ENCODE measurements at regions of chr5 and their contacts with region 1.

Region 1: GRCh38 chr5:177370488-177371119 is 12.9 kb downstream of the RGS14 start:
- DNase-seq: peak; percentile 89 to 95
- ATAC-seq: peak; percentile 79 to 88
- H3K4me3 ChIP-seq: peak overlapping the region; percentile 48
- H3K27ac ChIP-seq: peak overlapping the region; percentile 69 to 89
- H3K4me1 ChIP-seq: peaks cover 17% of the 10 kb centered on the region; the same call in 2 of the 3 replicates
- CTCF ChIP-seq: peak; percentile 51
- EP300 ChIP-seq: no peak
- POLR2A ChIP-seq: no peak
- RAD21 ChIP-seq: peak; percentile 58 to 68

Region 2: DNA sequence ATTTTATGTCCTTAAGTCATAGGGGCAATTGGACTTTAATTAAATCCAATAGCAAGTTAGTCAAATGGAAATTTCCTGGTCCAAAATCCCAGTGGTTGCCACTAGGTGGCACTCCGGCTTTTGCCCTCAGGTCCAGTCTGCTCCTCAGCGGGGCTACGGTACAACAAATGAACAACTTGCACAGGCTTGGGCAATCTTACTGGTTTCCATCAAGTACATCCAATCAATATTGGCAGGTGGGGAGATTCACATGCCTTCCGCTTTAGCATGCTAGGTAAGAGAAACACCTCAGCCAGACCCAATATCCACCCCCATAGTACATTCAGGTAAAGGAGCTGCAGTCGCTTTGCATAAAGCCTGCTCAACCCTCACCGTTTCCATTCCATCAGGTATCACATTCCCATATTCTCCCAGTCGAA is 52.6 kb before region 1 on chr5:
- CTCF ChIA-PET with region 1: interaction called, 22 read pairs
- POLR2A ChIA-PET with region 1: no interaction called
- DNase-seq: peak; percentile 79 to 82
- ATAC-seq: peak; percentile 51 to 76; a peak in 5 of 6 replicates
- H3K4me3 ChIP-seq: no peak overlapping the region
- H3K27ac ChIP-seq: no peak overlapping the region
- H3K4me1 ChIP-seq: peaks cover 2% of the 10 kb centered on the region; the same call in 2 of the 3 replicates
- CTCF ChIP-seq: peak; percentile 96
- EP300 ChIP-seq: no peak
- POLR2A ChIP-seq: no peak
- RAD21 ChIP-seq: peak; percentile 88 to 92

Region 3: GRCh38 chr5:177351385-177352329 is 18.9 kb before region 1 on chr5 and contains the start of gene LMAN2:
- CTCF ChIA-PET with region 1: interaction called, 27 read pairs
- POLR2A ChIA-PET with region 1: interaction called, 12 read pairs
- DNase-seq: peak; percentile 94 to 97
- ATAC-seq: peak; percentile 98 to 99
- H3K4me3 ChIP-seq: peak within 1 kb of the TSS; percentile 78
- H3K27ac ChIP-seq: peak within 1 kb of the TSS; percentile 90 to 94
- H3K4me1 ChIP-seq: peaks cover 31% of the 10 kb centered on the region
- CTCF ChIP-seq: no peak
- EP300 ChIP-seq: no peak
- POLR2A ChIP-seq: peak; percentile 73
- RAD21 ChIP-seq: no peak
- polyA plus RNA-seq, gene LMAN2: 123 and 172 TPM in 2 replicates

Region 4: GRCh38 chr5:177357459-177358351 is 12.9 kb before region 1 on chr5 and contains the start of gene RGS14:
- CTCF ChIA-PET with region 1: interaction called, 30 read pairs
- POLR2A ChIA-PET with region 1: interaction called, 4 read pairs
- DNase-seq: no peak
- ATAC-seq: no peak; a peak in 2 of 6 replicates
- H3K4me3 ChIP-seq: no peak within 1 kb of the TSS
- H3K27ac ChIP-seq: no peak within 1 kb of the TSS
- H3K4me1 ChIP-seq: peaks cover 12% of the 10 kb centered on the region; the same call in 2 of the 3 replicates
- CTCF ChIP-seq: no peak
- EP300 ChIP-seq: no peak
- POLR2A ChIP-seq: no peak
- RAD21 ChIP-seq: no peak
- polyA plus RNA-seq, gene RGS14: 3.9 and 5.8 TPM in 2 replicates

Region 5: DNA sequence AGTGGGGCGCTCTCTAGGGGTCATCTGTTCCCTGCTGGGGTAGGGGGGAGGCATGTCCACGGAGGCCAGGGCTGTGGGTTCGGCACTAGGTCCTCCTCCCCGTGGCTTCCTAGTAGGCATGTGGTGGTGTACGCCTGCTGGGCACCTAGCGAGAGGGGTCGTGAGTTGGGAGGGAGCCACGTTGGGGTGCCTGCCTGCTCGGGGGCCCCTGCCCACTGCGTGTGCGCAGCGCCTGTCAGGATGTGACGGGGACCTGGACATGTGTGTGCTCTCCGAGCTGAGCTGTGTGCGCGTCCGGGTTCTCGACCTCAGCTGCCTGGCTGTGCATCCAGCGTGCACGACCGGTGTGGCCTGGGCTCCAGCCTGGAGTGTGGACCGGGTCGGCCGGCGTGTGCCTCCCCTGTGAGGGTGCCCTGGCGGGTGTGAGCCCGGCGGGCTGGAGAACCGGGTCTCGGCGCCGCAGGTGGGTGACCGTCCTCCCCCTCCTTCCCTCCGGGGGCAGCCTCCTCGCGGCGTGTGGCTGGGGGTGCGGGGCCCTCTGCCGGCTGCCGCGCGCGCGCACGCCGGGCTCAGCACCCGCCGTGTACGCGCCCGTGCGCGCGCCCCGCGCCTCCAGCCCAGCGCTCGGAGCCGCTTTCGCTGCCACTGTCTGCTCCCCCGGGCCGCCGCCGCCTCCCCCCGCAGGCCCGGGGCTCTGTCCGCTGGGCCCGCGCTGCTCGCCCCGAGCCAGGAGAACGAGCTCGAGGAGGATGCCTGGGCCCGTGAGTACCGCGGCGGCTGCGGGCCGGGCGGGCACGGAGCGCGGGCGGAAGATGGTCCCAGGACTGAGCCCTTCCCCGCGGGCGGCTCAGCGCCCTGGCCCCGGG is 75.8 kb after region 1 on chr5 and contains the start of gene PRR7:
- CTCF ChIA-PET with region 1: interaction called, 13 read pairs
- POLR2A ChIA-PET with region 1: no interaction called
- DNase-seq: peak; percentile 73 to 85
- ATAC-seq: peak; percentile 39 to 43
- H3K4me3 ChIP-seq: peak within 1 kb of the TSS; percentile 86
- H3K27ac ChIP-seq: peak within 1 kb of the TSS; percentile 95 to 98
- H3K4me1 ChIP-seq: peaks cover 21% of the 10 kb centered on the region
- CTCF ChIP-seq: no peak
- EP300 ChIP-seq: no peak
- POLR2A ChIP-seq: peak; percentile 18; the same call in 1 of the 2 replicates
- RAD21 ChIP-seq: no peak
- polyA plus RNA-seq, gene PRR7: 1.8 and 2.2 TPM in 2 replicates